ENCODE measurements at regions of chr6 and their contacts with region 1.

Region 1: DNA sequence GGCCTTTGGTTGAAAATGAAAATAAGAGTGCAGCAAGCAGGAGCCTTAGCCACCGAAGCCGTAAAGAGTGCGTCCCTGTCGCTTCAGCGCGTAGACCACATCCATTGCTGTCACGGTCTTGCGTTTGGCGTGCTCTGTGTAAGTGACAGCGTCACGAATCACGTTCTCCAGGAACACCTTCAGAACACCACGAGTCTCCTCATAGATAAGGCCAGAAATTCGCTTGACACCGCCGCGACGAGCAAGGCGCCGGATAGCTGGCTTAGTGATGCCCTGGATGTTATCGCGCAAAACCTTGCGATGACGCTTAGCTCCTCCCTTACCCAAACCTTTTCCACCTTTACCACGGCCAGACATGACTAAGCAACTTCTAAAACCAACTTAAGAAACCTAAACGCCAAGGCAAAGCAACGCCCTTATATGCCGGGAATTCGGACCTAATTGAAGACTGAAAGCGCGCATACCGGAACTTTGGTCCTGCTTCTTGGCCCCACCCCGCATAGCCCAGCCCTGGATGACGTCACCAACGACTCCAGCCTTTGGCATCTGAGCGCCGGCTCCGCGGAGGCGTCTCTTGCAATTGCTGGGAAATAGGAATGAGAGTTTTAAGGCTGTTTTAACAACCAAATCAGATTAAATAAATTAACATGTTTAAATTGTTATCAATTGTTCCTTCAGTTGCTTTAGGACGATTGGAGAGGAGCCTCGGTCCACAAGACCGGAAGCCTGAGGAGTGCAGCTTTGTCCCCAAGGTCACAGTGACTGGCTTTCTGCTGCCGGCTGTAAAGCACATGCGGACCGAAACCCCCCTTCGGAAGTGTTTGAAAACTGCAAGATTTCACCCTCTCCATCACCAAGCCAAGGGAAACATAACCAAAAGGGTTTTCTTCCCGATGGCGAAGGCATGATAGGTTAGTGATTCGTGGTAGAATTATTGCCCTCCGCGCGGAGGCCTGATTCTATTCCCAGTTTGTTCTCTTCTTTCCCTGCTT is 79.6 kb upstream of the BTN3A2 start:
- DNase-seq: peak; percentile 89 to 98 (median 91)
- H3K4me3 ChIP-seq: peak overlapping the region; percentile 75
- H3K4me3 Mint-ChIP-seq: peak overlapping the region; percentile 83 to 97 (median 89)
- H3K27ac ChIP-seq: peak overlapping the region; percentile 97
- H3K27ac Mint-ChIP-seq: peak overlapping the region; percentile 93 to 98 (median 98)
- H3K4me1 ChIP-seq: peaks cover 15% of the 10 kb centered on the region
- H3K4me1 Mint-ChIP-seq: peaks cover 22 to 29% (median 23%) of the 10 kb centered on the region in 3 donors
- H3K27me3 ChIP-seq: no peaks in the 10 kb centered on the region
- H3K27me3 Mint-ChIP-seq: peaks cover 0 to 20% of the 10 kb centered on the region in 2 donors

Region 2: DNA sequence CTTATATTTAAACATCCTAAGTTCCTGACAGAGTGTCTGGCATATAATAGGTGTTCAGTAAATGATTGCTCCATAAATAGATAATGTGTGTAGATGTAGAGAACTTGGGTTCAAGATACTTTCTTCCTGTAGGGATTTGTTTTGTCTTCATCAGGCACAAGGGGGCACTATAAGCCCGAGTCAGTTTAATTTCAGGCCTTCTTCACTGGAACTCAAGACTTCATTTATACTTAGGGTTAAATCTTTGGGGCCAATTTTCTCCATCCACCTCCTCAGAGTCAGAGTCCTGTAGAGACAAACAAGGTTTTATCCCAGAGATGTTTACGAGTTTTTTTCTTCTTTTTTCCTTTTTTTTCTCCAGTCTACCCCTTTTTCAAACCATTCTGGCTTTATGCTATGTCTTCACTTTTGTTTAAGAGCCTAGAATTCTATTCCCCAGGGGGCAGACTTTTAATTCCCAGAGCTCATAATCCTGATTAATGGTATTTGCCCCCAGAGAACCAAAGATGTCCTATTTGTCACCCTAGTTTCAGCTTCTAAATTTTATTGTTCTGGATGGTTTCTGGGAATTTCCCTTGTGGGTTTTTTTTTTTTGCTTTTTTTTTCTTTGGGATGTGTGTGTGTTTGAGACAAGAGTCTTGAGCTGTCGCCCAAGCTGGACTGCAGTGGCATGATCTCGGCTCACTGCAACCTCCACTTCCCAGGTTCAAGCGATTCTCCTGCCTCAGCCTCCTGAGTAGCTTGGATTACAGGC is 109.8 kb before region 1 on chr6:
- CTCF ChIA-PET with region 1: interaction called, 4 read pairs
- POLR2A ChIA-PET with region 1: interaction called, 14 read pairs
- DNase-seq: peak; percentile 8 to 63 (median 52)
- H3K4me3 ChIP-seq: no peak overlapping the region
- H3K4me3 Mint-ChIP-seq: peak overlapping the region in 2 of 7 donors; percentile 21 to 75
- H3K27ac ChIP-seq: no peak overlapping the region
- H3K27ac Mint-ChIP-seq: peak overlapping the region; percentile 8 to 89 (median 78)
- H3K4me1 ChIP-seq: peaks cover 36% of the 10 kb centered on the region
- H3K4me1 Mint-ChIP-seq: peaks cover 30 to 44% (median 40%) of the 10 kb centered on the region in 3 donors
- H3K27me3 ChIP-seq: no peaks in the 10 kb centered on the region
- H3K27me3 Mint-ChIP-seq: peaks cover 0 to 3% of the 10 kb centered on the region in 2 donors

Region 3: DNA sequence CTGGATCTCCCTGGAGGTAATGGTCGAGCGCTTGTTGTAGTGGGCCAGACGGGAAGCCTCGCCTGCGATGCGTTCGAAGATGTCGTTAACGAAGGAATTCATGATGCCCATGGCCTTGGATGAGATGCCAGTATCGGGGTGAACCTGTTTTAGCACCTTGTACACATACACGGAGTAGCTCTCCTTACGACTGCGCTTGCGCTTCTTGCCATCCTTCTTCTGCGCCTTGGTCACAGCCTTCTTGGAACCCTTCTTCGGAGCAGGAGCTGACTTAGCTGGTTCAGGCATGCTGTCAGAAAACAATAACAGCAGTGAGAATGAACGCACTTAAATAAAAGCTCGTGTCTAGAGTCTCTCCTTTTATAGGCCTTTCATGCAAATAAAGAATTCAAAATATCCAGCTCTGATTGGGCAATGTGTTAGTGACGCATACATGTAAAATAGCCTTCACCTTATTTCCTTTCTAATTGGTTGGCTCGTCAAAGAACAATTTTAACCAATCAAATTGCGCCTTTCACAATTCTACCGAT is 69.0 kb before region 1 on chr6:
- CTCF ChIA-PET with region 1: interaction called, 18 read pairs
- POLR2A ChIA-PET with region 1: interaction called, 61 read pairs
- DNase-seq: peak; percentile 43 to 93 (median 91)
- H3K4me3 ChIP-seq: peak overlapping the region; percentile 91
- H3K4me3 Mint-ChIP-seq: no peak overlapping the region
- H3K27ac ChIP-seq: peak overlapping the region; percentile 94
- H3K27ac Mint-ChIP-seq: no peak overlapping the region
- H3K4me1 ChIP-seq: peaks cover 23% of the 10 kb centered on the region
- H3K4me1 Mint-ChIP-seq: peaks cover 2 to 8% (median 5%) of the 10 kb centered on the region in 3 donors
- H3K27me3 ChIP-seq: no peaks in the 10 kb centered on the region
- H3K27me3 Mint-ChIP-seq: no peaks in the 10 kb centered on the region

Region 4: GRCh38 chr6:26234421-26235296 is 50.8 kb before region 1 on chr6:
- CTCF ChIA-PET with region 1: interaction called, 12 read pairs
- POLR2A ChIA-PET with region 1: interaction called, 59 read pairs
- DNase-seq: peak; percentile 38 to 84 (median 76)
- H3K4me3 ChIP-seq: peak overlapping the region; percentile 94
- H3K4me3 Mint-ChIP-seq: peak overlapping the region; percentile 87 to 95 (median 91)
- H3K27ac ChIP-seq: peak overlapping the region; percentile 88
- H3K27ac Mint-ChIP-seq: peak overlapping the region; percentile 87 to 98 (median 96)
- H3K4me1 ChIP-seq: peaks cover 19% of the 10 kb centered on the region
- H3K4me1 Mint-ChIP-seq: peaks cover 28 to 35% (median 35%) of the 10 kb centered on the region in 3 donors
- H3K27me3 ChIP-seq: no peaks in the 10 kb centered on the region
- H3K27me3 Mint-ChIP-seq: peaks cover 0 to 5% of the 10 kb centered on the region in 2 donors

Region 5: DNA sequence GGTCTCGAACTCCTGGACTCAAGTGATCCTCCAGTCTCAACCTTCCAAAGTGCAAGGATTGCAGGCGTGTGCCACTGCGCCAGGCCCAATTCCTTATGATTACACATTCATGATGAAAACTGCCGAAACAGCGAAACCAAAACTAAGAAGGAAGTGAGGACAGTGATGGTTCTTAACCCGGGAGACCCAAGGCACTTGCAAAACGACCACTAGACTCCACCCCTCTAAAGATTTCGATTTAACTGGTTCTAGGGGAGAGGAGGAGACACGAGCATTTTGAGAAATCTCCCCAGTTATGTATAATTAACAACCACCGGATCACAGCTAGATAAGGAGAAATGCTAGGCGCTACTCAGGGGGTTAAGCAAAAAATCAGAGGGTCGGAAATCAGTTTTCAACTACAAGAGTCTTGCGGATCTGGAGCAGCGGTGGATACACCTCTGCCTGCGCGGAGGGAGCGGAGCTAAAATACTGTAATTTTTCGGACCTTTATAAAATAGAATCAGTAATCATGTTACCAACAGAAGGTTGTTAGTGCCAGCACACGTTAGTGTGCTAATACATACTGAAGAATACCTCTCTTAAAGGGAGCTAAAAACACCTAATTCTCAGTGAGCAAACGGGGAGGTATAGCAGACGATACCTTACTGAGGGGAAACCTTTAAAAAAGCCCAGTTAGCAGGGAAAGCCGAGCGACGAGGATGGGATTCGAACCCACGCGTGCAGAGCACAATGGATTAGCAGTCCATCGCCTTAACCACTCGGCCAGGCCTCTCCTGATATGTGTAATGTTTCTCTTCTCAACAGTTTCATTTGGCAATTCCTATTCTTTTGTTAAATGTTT is 19.6 kb after region 1 on chr6:
- CTCF ChIA-PET with region 1: interaction called, 6 read pairs
- POLR2A ChIA-PET with region 1: interaction called, 16 read pairs
- DNase-seq: peak; percentile 20 to 75 (median 64)
- H3K4me3 ChIP-seq: peak overlapping the region; percentile 49
- H3K4me3 Mint-ChIP-seq: peak overlapping the region; percentile 88 to 95 (median 94)
- H3K27ac ChIP-seq: peak overlapping the region; percentile 65
- H3K27ac Mint-ChIP-seq: peak overlapping the region; percentile 85 to 99 (median 95)
- H3K4me1 ChIP-seq: peaks cover 19% of the 10 kb centered on the region
- H3K4me1 Mint-ChIP-seq: peaks cover 41 to 59% (median 51%) of the 10 kb centered on the region in 3 donors
- H3K27me3 ChIP-seq: no peaks in the 10 kb centered on the region
- H3K27me3 Mint-ChIP-seq: peaks cover 0 to 8% of the 10 kb centered on the region in 2 donors

Region 6: GRCh38 chr6:26342106-26343004 is 56.9 kb after region 1 on chr6:
- CTCF ChIA-PET with region 1: no interaction called
- POLR2A ChIA-PET with region 1: no interaction called
- DNase-seq: no peak
- H3K4me3 ChIP-seq: peak overlapping the region; percentile 48
- H3K4me3 Mint-ChIP-seq: peak overlapping the region; percentile 41 to 91 (median 86)
- H3K27ac ChIP-seq: no peak overlapping the region
- H3K27ac Mint-ChIP-seq: peak overlapping the region in 7 of 8 donors; percentile 48 to 95 (median 73)
- H3K4me1 ChIP-seq: no peaks in the 10 kb centered on the region
- H3K4me1 Mint-ChIP-seq: peaks cover 9 to 12% (median 10%) of the 10 kb centered on the region in 3 donors
- H3K27me3 ChIP-seq: no peaks in the 10 kb centered on the region
- H3K27me3 Mint-ChIP-seq: peaks cover 0 to 2% of the 10 kb centered on the region in 2 donors

Region 7: DNA sequence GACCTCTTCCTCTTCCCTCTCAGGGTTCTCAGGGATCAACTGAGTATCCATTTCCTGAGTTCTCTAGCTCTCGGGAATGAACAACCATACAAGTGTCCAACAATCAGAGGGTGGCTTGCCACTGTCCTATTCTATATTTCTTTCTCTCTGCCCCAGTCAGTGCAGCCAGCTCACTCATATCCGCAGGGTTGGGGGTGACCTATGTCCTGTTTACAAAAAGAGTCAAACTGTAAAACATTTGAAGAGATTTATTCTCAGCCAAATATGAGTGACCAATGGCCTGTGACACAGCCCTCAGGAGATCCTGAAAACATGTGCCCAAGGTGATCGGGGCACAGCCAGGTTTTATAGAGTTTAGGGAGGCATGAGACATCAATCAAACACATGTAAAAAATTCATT is 68.7 kb after region 1 on chr6:
- CTCF ChIA-PET with region 1: no interaction called
- POLR2A ChIA-PET with region 1: no interaction called
- DNase-seq: no peak
- H3K4me3 ChIP-seq: no peak overlapping the region
- H3K4me3 Mint-ChIP-seq: no peak overlapping the region
- H3K27ac ChIP-seq: no peak overlapping the region
- H3K27ac Mint-ChIP-seq: no peak overlapping the region
- H3K4me1 ChIP-seq: peaks cover 8% of the 10 kb centered on the region
- H3K4me1 Mint-ChIP-seq: peaks cover 2 to 5% (median 3%) of the 10 kb centered on the region in 3 donors
- H3K27me3 ChIP-seq: no peaks in the 10 kb centered on the region
- H3K27me3 Mint-ChIP-seq: no peaks in the 10 kb centered on the region

Region 8: DNA sequence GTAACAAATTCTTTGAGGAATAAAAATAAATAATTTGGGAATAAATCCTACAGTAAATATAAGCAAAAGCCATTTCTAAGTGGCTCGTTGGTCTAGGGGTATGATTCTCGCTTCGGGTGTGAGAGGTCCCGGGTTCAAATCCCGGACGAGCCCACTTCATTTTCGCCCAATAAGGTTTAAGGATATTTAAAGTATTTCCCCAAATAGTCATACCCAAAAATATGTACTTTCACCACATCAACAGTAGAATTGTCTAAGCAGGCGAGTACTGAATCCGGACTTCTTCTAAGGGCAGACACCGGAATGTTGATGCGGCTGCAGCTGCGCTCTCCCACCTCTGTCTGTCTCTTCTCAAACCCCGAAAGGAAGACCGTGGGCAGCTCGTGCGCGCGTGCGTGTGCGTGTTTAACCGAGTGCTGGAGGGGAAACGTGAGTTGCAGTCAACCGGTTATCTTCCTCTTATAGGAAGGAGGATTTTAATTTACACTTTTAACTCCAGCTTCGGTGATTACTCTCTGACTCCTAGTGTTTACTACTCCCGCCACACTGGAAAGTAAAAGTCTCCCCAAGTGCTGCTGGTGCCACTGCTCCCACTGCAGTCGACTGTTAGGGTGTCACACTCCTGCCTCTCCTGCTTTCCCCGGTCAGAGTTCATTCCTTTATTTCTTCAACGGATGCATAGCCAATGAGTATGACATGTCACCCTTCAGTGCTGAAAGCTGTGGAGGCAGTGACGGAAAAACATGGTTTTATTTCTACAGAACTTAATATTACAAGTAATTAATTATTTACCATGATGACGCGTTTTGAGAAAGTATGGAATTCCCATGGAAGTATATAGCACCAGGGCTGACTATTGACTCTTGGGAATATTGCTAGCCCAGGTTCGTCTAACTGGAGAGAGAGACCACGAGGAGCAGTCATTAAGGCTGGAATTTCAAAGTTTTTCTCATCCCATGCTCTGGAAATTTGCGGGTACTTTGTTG is 806.5 kb after region 1 on chr6:
- CTCF ChIA-PET with region 1: no interaction called
- POLR2A ChIA-PET with region 1: no interaction called
- DNase-seq: peak in 1 of 5 donors; percentile 4
- H3K4me3 ChIP-seq: no peak overlapping the region
- H3K4me3 Mint-ChIP-seq: peak overlapping the region in 6 of 7 donors; percentile 36 to 73 (median 55)
- H3K27ac ChIP-seq: peak overlapping the region; percentile 29
- H3K27ac Mint-ChIP-seq: no peak overlapping the region
- H3K4me1 ChIP-seq: peaks cover 6% of the 10 kb centered on the region
- H3K4me1 Mint-ChIP-seq: peaks cover 13 to 16% (median 15%) of the 10 kb centered on the region in 3 donors
- H3K27me3 ChIP-seq: peaks cover 34% of the 10 kb centered on the region
- H3K27me3 Mint-ChIP-seq: peaks cover 56 to 85% of the 10 kb centered on the region in 2 donors

Region 9: GRCh38 chr6:27146706-27147505 is 861.5 kb after region 1 on chr6:
- CTCF ChIA-PET with region 1: no interaction called
- POLR2A ChIA-PET with region 1: interaction called, 22 read pairs
- DNase-seq: peak; percentile 42 to 93 (median 89)
- H3K4me3 ChIP-seq: peak overlapping the region; percentile 97
- H3K4me3 Mint-ChIP-seq: no peak overlapping the region
- H3K27ac ChIP-seq: peak overlapping the region; percentile 91
- H3K27ac Mint-ChIP-seq: no peak overlapping the region
- H3K4me1 ChIP-seq: peaks cover 20% of the 10 kb centered on the region
- H3K4me1 Mint-ChIP-seq: peaks cover 7 to 21% (median 10%) of the 10 kb centered on the region in 3 donors
- H3K27me3 ChIP-seq: no peaks in the 10 kb centered on the region
- H3K27me3 Mint-ChIP-seq: no peaks in the 10 kb centered on the region